AG04449 (cell line): ENCODE measurements at regions of chr1 and their contacts with region 1.

Region 1: DNA sequence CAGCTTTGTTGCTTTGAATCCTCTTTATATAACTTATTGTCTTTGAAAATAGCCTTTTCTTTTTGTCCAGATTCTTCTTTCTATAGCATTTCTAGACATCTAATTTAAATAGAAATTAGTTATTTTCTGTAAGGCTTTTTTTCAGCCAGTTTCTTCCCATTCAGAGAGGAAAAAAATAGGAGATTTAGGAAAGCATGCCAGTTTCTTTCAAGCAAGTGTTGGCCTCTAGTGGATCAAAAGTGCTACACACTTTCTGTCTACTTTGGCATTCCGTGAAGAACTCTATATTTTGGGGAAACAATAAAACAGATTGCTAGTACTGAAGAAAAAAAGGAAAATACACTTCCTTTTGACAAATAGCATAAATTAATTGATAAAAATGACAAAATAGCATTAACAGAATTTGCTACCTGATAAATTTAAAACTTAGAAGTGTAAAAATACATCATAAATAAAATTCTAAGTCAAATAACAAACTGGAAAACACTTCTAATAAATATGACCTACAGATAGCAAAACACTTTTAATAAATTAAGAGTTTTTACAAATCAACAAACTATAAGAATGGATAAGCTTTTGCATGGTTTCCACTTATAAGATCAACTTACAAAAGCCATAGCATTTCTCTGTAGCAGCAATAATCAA is 13.1 kb upstream of the EXO1 start:
- DNase-seq: no peak
- H3K4me3 ChIP-seq: no peak overlapping the region
- CTCF ChIP-seq: peak; percentile 64

Region 2: DNA sequence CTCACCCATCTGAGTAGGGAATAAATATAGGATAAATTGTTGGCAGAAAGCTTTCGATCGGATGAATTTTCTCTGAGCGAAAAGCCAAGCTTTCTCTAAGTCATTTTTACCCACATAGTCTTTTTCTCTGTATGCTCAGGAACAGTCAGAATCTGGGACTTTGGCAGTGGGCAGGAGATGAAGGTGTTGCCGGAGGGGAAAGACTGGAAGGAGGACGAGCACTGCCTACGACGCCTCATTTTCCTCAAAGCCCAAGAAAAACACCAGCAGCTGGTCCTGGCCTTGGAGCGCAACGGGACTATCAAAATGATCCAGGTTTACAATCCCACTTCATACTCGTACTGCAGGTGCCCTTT is 85.5 kb before region 1 on chr1:
- CTCF ChIA-PET with region 1: no interaction called
- POLR2A ChIA-PET with region 1: no interaction called
- DNase-seq: no peak
- H3K4me3 ChIP-seq: no peak overlapping the region
- CTCF ChIP-seq: no peak

Region 3: DNA sequence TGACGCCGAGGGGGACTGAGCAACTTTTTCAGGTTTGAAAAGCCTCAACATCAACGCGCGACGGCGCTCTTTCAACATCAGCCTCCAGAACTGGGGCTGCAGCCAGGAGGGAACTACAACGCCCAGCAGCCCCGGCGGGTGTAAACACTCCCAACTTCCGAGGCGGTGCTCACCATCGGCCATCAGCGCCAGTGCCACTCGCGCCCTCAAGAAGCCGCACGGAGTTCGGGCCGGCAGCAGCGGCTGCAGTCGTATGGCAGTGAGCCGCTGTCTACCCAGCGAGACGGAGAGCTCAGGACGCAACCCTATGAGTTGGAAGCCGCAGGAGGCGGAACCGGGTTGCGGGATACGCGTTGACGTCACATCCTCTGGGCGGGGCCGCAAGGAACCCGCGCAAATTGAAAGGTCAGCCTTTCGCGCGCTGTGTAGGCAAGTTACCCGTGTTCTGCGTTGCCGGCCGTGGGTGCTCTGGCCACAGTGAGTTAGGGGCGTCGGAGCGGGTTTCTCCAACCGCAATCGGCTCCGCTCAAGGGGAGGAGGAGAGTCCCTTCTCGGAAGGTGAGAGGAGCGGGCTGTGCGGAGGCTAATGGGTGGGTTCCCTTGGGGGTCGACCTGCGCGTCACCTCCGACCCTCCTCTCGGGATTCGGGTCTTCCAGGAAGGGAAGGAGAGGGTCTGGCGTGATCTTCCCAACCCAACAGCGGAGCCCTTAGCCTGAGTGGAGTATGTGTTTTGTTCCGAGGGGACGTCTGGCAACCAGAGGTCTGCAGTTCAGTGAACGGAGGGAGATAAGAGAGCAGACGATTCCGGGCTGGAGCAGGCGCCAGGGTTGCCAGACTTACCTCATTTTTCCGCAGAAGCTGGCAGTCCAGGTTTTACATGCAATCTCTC is 13.2 kb after region 1 on chr1 and contains the start of gene EXO1:
- CTCF ChIA-PET with region 1: interaction called, 10 read pairs
- POLR2A ChIA-PET with region 1: interaction called, 5 read pairs
- DNase-seq: no peak
- H3K4me3 ChIP-seq: peak within 1 kb of the TSS; percentile 97
- CTCF ChIP-seq: peak; percentile 33